PC-3 (cell line): ENCODE measurements at regions of chr17 and their contacts with region 1.

Region 1: DNA sequence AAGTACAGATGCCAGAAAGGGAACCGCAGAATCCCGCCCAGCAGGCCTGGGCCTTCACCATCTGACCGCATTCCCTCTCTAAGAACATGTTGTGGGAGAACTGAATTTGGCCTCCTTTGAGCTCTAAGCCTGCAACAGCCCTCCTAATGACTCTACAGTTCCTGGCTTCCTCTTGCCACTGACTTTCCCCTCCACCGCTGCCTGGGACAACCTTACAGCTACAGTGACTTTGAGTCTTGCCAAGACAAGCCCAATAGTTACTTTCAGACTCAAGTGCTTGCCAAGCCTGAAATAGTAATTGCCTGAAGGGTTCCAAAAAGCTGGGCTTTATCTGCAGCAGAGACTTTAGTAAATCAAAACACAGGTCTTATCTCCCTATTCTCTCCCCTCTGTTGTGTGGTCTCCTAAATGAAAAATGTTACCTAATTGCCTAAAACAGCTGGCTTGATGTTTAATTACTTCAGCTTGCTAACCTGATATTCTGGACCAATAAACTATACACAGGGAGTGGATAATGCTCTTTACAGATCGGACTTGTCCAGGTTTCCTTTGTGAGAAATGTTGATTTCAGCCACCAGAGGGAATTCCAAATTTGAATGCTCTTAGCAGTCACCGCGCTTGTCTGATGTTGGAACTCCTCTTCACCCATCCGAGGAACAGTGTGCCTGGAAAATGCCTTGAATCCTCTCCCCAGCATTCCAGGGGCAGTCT is 85.1 kb upstream of the TBX2 start:
- DNase-seq: no peak
- ATAC-seq: peak; percentile 29
- H3K4me3 ChIP-seq: no peak overlapping the region
- H3K27ac ChIP-seq: no peak overlapping the region
- H3K4me1 ChIP-seq: peaks cover 9% of the 10 kb centered on the region; the same call in 1 of the 2 replicates
- H3K27me3 ChIP-seq: no peaks in the 10 kb centered on the region
- CTCF ChIP-seq: peak; percentile 27; the same call in 1 of the 2 replicates

Region 2: DNA sequence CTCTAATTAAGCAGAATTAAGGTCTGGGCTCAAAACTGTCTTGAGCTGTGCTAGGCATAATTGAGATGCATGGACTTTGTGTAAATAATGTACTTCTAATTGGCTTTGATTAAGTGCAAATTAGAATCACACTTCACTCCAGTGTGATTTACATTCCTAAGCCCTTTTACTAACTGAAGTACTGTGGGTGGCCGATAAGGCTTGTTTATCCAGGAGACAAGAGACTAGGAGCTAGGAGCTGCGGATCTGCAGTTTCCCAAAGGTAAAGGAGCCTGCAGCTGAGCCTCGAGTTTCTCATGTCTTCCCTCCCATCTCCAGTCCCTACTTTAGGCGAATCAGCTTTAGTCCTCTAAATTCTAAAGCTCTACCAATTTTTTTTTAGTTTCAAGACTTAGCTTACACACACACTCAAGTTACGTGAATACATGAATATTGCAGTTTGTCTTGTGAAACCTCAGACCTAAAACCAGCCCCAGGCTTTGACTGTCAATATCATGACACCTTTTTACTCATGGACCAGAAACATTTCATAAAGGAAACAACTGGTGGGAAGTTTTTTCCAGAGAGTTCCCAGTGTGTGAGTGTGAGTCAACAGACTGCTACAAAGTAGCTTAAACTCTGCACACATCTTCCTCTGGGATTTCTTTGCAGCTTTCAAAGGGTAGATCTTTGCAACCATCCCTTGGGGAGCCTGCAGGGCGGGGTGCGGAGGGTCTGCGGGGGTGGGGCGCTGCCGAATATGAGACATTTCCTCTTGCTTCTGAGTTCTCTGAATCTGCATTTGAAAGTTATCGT is 28.8 kb before region 1 on chr17:
- CTCF ChIA-PET with region 1: no interaction called
- POLR2A ChIA-PET with region 1: no interaction called
- intact Hi-C with region 1: no loop called
- DNase-seq: peak; percentile 22
- ATAC-seq: no peak
- H3K4me3 ChIP-seq: no peak overlapping the region
- H3K27ac ChIP-seq: no peak overlapping the region
- H3K4me1 ChIP-seq: no peaks in the 10 kb centered on the region
- H3K27me3 ChIP-seq: no peaks in the 10 kb centered on the region
- CTCF ChIP-seq: no peak

Region 3: DNA sequence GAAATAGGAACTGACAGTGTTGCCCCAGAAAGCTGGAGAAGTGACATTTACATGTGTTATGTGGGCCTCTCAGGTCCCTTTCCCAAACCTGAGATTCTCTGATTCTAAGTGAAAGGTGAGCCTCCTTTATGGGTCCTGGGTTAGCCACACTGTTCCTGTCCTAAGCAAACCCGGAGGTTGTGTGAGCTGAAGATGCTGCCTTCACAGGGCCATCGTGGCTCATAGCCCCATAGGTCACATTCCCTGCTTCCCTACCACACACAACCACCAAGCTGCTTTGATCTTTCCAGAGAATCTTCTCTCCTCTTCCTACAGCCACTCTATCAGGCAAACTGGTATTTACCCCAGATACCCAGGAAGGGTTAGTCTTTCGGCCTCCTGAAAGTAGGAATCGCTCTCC is 61.6 kb after region 1 on chr17:
- CTCF ChIA-PET with region 1: interaction called, 13 read pairs
- POLR2A ChIA-PET with region 1: no interaction called
- intact Hi-C with region 1: no loop called
- DNase-seq: no peak
- ATAC-seq: no peak
- H3K4me3 ChIP-seq: no peak overlapping the region
- H3K27ac ChIP-seq: no peak overlapping the region
- H3K4me1 ChIP-seq: no peaks in the 10 kb centered on the region
- H3K27me3 ChIP-seq: no peaks in the 10 kb centered on the region
- CTCF ChIP-seq: no peak